Calu3 (cell line): ENCODE measurements at regions of chr4 and their contacts with region 1.

Region 1: DNA sequence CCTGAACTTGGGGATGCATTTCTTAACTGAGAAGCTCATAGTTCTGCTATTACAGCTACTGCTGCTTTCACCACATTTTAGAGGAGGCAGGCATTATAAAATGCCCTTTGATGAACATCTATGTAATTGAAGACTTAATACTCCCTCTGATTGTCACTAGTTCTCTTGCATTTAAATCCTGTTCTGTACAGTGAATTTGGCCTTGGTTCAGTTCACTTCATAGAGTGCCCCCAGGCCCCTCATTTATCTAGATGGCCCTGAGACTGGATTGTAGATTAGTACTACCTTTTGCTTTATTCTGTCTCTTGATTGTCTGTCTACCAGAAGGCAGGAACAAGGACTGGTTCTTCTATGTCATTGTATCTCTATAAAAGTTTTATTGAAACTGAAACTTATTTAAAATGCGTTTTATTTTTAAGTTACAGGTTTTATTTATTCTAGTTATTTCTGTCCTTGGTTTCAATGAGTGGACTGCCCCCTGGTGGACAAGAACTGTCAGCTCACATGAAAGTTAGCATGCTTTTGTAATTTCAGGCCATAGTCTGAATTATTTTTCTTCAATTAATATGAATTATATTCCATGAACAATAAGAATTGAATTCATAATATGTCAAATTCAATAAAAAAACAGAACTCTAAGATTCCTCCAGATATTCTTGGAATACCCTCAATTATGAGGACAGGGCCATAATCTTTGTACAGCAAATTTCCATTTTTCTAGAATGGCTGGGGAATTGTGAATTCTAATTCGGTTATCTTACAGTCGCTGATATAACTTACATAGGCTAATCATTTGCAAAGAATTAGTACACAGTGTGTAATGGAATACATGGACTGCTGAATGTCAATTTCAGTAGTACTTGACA is 47.2 kb upstream of the TMEM33 start:
- DNase-seq: peak; percentile 34
- H3K4me3 Mint-ChIP-seq: no peak overlapping the region
- H3K27ac Mint-ChIP-seq: no peak overlapping the region
- H3K4me1 Mint-ChIP-seq: no peaks in the 10 kb centered on the region
- H3K27me3 Mint-ChIP-seq: no peaks in the 10 kb centered on the region
- CTCF ChIP-seq: peak; percentile 41

Region 2: DNA sequence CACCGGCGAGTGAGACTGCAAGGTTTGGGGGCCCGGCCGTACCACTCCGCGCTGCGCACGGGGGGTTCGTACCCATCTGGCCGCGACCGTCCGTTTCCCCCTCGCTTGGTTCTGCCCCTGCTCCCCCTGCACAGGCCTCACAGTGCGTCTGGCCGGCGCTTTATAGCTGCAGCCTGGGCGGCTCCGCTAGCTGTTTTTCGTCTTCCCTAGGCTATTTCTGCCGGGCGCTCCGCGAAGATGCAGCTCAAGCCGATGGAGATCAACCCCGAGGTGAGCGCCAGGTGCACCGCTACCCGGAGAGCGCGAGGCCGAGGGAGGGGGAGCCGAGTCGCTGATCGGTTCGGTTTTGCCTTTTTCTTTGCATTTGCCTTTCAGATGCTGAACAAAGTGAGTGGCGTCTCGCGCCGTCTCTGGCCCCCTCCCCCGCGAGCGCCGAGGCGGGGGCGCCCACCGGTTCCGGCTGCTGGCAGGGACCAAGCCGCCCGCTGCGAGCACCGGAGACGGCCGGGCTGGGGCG is 631.3 kb before region 1 on chr4 and contains the start of gene UCHL1:
- CTCF ChIA-PET with region 1: no interaction called
- intact Hi-C with region 1: loop called (anchors 5 kb)
- DNase-seq: no peak
- H3K4me3 Mint-ChIP-seq: peak within 1 kb of the TSS; percentile 69
- H3K27ac Mint-ChIP-seq: no peak within 1 kb of the TSS
- H3K4me1 Mint-ChIP-seq: peaks cover 11% of the 10 kb centered on the region
- H3K27me3 Mint-ChIP-seq: no peaks in the 10 kb centered on the region
- CTCF ChIP-seq: no peak
- total RNA-seq, gene UCHL1: 17.2 and 19.3 TPM in 2 replicates

Region 3: GRCh38 chr4:41692717-41693345 is 195.2 kb before region 1 on chr4:
- CTCF ChIA-PET with region 1: no interaction called
- intact Hi-C with region 1: loop called (anchors 1 kb)
- DNase-seq: peak; percentile 49
- H3K4me3 Mint-ChIP-seq: no peak overlapping the region
- H3K27ac Mint-ChIP-seq: no peak overlapping the region
- H3K4me1 Mint-ChIP-seq: no peaks in the 10 kb centered on the region
- H3K27me3 Mint-ChIP-seq: no peaks in the 10 kb centered on the region
- CTCF ChIP-seq: peak; percentile 69